Caco-2 (cell line): ENCODE measurements at regions of chr21 and their contacts with region 1.

Region 1: GRCh38 chr21:17512253-17513213 is at the start of gene CXADR:
- DNase-seq: peak; percentile 95 to 97
- H3K4me3 ChIP-seq: peak within 1 kb of the TSS; percentile 92
- H3K4me3 Mint-ChIP-seq: peak within 1 kb of the TSS; percentile 87
- H3K27ac Mint-ChIP-seq: peak within 1 kb of the TSS; percentile 89
- H3K4me1 ChIP-seq: peaks cover 22% of the 10 kb centered on the region
- H3K4me1 Mint-ChIP-seq: peaks cover 38% of the 10 kb centered on the region
- H3K27me3 ChIP-seq: no peaks in the 10 kb centered on the region
- H3K27me3 Mint-ChIP-seq: no peaks in the 10 kb centered on the region
- CTCF ChIP-seq: peak; percentile 81 to 87
- total RNA-seq, gene CXADR: 98.6 and 102 TPM in 2 replicates

Region 2: GRCh38 chr21:17387030-17387617 is 125.4 kb before region 1 on chr21:
- CTCF ChIA-PET with region 1: interaction called, 7 read pairs
- POLR2A ChIA-PET with region 1: no interaction called
- intact Hi-C with region 1: loop called (anchors 2 kb)
- DNase-seq: peak in 1 of 2 experiments; percentile 72
- H3K4me3 ChIP-seq: no peak overlapping the region
- H3K4me3 Mint-ChIP-seq: no peak overlapping the region
- H3K27ac Mint-ChIP-seq: no peak overlapping the region
- H3K4me1 ChIP-seq: no peaks in the 10 kb centered on the region; the same call in 1 of the 2 replicates
- H3K4me1 Mint-ChIP-seq: peaks cover 5% of the 10 kb centered on the region
- H3K27me3 ChIP-seq: no peaks in the 10 kb centered on the region
- H3K27me3 Mint-ChIP-seq: no peaks in the 10 kb centered on the region
- CTCF ChIP-seq: peak; percentile 40 to 82

Region 3: GRCh38 chr21:17454315-17455027 is 58.1 kb before region 1 on chr21:
- CTCF ChIA-PET with region 1: no interaction called
- POLR2A ChIA-PET with region 1: no interaction called
- intact Hi-C with region 1: no loop called
- DNase-seq: peak; percentile 62 to 68
- H3K4me3 ChIP-seq: peak overlapping the region; percentile 15; the same call in 1 of the 2 replicates
- H3K4me3 Mint-ChIP-seq: peak overlapping the region; percentile 64
- H3K27ac Mint-ChIP-seq: peak overlapping the region; percentile 89
- H3K4me1 ChIP-seq: no peaks in the 10 kb centered on the region
- H3K4me1 Mint-ChIP-seq: peaks cover 6% of the 10 kb centered on the region
- H3K27me3 ChIP-seq: no peaks in the 10 kb centered on the region
- H3K27me3 Mint-ChIP-seq: peaks cover 3% of the 10 kb centered on the region
- CTCF ChIP-seq: no peak

Region 4: DNA sequence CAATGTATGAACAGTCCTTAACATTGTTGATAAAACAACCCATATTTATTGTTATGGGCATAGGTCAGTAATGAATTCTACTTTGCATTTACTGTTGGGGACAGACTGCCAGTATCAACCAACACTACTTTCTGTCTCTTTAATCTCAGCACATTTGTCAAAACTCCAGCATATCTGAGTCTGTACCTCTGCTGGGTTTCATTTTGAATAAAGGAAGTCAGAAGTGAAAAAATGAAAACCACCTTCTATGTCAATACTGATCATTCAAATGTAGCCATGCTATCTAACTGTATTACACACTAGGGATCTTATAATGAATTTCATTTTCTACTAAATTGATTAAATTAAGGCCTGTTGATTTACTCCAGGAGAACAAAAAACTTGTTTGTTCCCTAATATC is 23.9 kb before region 1 on chr21:
- CTCF ChIA-PET with region 1: no interaction called
- POLR2A ChIA-PET with region 1: no interaction called
- intact Hi-C with region 1: loop called (anchors 1 kb)
- DNase-seq: no peak
- H3K4me3 ChIP-seq: no peak overlapping the region
- H3K4me3 Mint-ChIP-seq: no peak overlapping the region
- H3K27ac Mint-ChIP-seq: no peak overlapping the region
- H3K4me1 ChIP-seq: peaks cover 6% of the 10 kb centered on the region
- H3K4me1 Mint-ChIP-seq: peaks cover 7% of the 10 kb centered on the region
- H3K27me3 ChIP-seq: no peaks in the 10 kb centered on the region
- H3K27me3 Mint-ChIP-seq: no peaks in the 10 kb centered on the region
- CTCF ChIP-seq: no peak

Region 5: GRCh38 chr21:17527240-17527639 is 14.7 kb after region 1 on chr21:
- CTCF ChIA-PET with region 1: interaction called, 4 read pairs
- POLR2A ChIA-PET with region 1: interaction called, 5 read pairs
- intact Hi-C with region 1: loop called (anchors 1 kb)
- DNase-seq: peak; percentile 55 to 56
- H3K4me3 ChIP-seq: no peak overlapping the region
- H3K4me3 Mint-ChIP-seq: peak overlapping the region; percentile 51
- H3K27ac Mint-ChIP-seq: peak overlapping the region; percentile 91
- H3K4me1 ChIP-seq: peaks cover 68% of the 10 kb centered on the region
- H3K4me1 Mint-ChIP-seq: peaks cover 43% of the 10 kb centered on the region
- H3K27me3 ChIP-seq: no peaks in the 10 kb centered on the region
- H3K27me3 Mint-ChIP-seq: no peaks in the 10 kb centered on the region
- CTCF ChIP-seq: no peak

Region 6: GRCh38 chr21:17554679-17555465 is 42.3 kb after region 1 on chr21:
- CTCF ChIA-PET with region 1: interaction called, 4 read pairs
- POLR2A ChIA-PET with region 1: no interaction called
- intact Hi-C with region 1: loop called (anchors 1 kb)
- DNase-seq: peak in 1 of 2 experiments; percentile 26
- H3K4me3 ChIP-seq: no peak overlapping the region
- H3K4me3 Mint-ChIP-seq: no peak overlapping the region
- H3K27ac Mint-ChIP-seq: peak overlapping the region; percentile 65
- H3K4me1 ChIP-seq: peaks cover 11% of the 10 kb centered on the region
- H3K4me1 Mint-ChIP-seq: peaks cover 38% of the 10 kb centered on the region
- H3K27me3 ChIP-seq: no peaks in the 10 kb centered on the region
- H3K27me3 Mint-ChIP-seq: no peaks in the 10 kb centered on the region
- CTCF ChIP-seq: peak; percentile 18 to 49